ENCODE measurements at regions of chr18 and their contacts with region 1.

Region 1: GRCh38 chr18:22385718-22386117 is 32.0 kb downstream of the CTAGE1 start:
- DNase-seq: no peak
- H3K4me3 ChIP-seq: no peak overlapping the region
- H3K27ac ChIP-seq: no peak overlapping the region
- H3K27me3 ChIP-seq: peaks cover 0 to 25% (median 0%) of the 10 kb centered on the region in 45 donors
- CTCF ChIP-seq: no peak

Region 2: GRCh38 chr18:21833604-21834298 is 552.0 kb before region 1 on chr18:
- intact Hi-C with region 1: no loop called
- DNase-seq: no peak
- H3K4me3 ChIP-seq: no peak overlapping the region
- H3K27ac ChIP-seq: no peak overlapping the region
- H3K27me3 ChIP-seq: no peaks in the 10 kb centered on the region
- CTCF ChIP-seq: no peak

Region 3: GRCh38 chr18:22428672-22429071 is 43.0 kb after region 1 on chr18:
- intact Hi-C with region 1: no loop called
- DNase-seq: no peak
- H3K4me3 ChIP-seq: no peak overlapping the region
- H3K27ac ChIP-seq: no peak overlapping the region
- H3K27me3 ChIP-seq: peaks cover 0 to 11% (median 0%) of the 10 kb centered on the region in 45 donors
- CTCF ChIP-seq: no peak

Region 4: DNA sequence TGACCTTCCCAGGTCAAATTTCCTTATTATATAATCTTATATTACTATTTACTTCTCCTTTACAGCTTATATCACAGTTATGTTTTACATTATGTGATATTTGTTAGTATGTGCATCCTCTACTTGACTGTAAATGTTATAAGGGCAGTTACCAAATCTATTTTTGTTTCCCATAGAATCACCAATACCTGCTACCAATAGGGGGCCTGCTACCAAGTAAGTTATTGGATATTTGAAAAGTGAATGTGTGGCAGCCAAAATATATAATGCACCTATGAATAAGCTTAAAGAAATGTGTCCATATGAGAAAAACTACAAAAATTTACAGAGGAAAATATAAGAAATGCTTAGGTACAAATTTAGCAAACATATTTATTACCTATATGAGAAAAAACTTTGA is 55.9 kb after region 1 on chr18:
- intact Hi-C with region 1: loop called in 1 of 2 experiments (anchors 10 kb)
- DNase-seq: no peak
- H3K4me3 ChIP-seq: no peak overlapping the region
- H3K27ac ChIP-seq: no peak overlapping the region
- H3K27me3 ChIP-seq: peaks cover 0 to 10% (median 0%) of the 10 kb centered on the region in 45 donors
- CTCF ChIP-seq: no peak